ENCODE measurements at regions of chr12 and their contacts with region 1.

Region 1: DNA sequence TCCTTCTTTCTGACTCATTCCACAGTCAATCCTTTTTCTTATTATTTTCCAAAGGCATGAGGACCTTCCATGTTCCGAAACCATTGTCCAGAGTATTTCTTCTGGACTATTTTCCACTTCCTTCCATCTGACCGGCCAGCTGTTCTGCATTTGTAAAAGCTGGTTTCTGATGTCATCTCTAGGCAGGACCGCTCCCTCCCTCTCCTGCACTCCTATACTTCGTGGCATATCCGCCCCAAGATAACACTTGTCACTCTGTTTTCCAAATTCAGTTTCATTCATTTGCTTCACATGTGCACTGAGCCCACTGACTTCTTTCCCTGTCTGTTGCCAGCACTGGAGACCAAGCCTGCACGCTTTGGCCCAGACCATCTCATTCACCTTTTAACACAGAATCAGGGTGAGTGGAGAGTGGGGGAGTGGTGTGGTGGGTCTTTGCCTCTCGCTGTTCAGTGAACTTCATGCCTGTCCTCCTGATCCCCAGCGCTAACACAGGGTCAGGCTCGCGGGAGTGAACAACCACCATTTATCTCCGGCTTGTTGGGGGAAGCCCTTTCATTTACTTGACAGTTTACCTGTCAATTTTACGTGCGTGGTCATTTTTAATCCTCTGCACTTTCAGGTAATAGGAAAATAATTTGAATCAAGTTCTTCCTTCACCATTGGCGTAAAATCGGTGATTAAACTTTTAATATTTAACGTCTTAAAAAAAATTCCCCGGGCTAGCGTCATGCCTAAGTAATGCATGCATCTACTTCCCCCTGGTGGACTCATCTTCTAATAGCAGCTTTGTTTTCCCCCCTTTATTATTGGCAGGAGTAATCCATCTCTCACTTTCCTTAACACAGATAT is 52.5 kb downstream of the C12orf75 start:
- H3K4me3 Mint-ChIP-seq: no peak overlapping the region
- H3K27ac Mint-ChIP-seq: no peak overlapping the region
- H3K4me1 Mint-ChIP-seq: no peaks in the 10 kb centered on the region
- H3K27me3 Mint-ChIP-seq: no peaks in the 10 kb centered on the region

Region 2: GRCh38 chr12:105164068-105164467 is 218.9 kb before region 1 on chr12:
- intact Hi-C with region 1: loop called (anchors 5 kb)
- H3K4me3 Mint-ChIP-seq: no peak overlapping the region
- H3K27ac Mint-ChIP-seq: no peak overlapping the region
- H3K4me1 Mint-ChIP-seq: no peaks in the 10 kb centered on the region
- H3K27me3 Mint-ChIP-seq: no peaks in the 10 kb centered on the region

Region 3: DNA sequence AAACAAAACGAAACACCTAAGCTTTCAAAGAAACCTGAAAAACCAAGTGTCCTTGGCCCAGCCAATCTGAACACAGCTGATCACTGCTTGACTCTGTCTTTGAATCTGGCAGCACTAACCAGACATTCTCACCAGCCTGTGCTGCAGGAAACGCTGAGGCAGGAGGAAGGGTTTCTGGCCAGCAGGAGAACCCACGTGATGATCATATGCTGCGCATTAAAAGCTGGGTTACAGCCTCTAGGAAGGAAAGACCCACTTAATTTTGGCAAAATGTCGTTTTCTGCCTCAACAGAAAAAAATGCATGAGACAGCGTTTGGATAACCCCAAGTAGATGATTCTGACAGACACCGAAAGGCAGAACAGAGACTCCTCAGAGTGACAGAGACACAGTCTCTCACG is 156.8 kb before region 1 on chr12:
- intact Hi-C with region 1: loop called (anchors 10 kb)
- H3K4me3 Mint-ChIP-seq: peak overlapping the region; percentile 20
- H3K27ac Mint-ChIP-seq: peak overlapping the region; percentile 80
- H3K4me1 Mint-ChIP-seq: peaks cover 90% of the 10 kb centered on the region
- H3K27me3 Mint-ChIP-seq: no peaks in the 10 kb centered on the region

Region 4: DNA sequence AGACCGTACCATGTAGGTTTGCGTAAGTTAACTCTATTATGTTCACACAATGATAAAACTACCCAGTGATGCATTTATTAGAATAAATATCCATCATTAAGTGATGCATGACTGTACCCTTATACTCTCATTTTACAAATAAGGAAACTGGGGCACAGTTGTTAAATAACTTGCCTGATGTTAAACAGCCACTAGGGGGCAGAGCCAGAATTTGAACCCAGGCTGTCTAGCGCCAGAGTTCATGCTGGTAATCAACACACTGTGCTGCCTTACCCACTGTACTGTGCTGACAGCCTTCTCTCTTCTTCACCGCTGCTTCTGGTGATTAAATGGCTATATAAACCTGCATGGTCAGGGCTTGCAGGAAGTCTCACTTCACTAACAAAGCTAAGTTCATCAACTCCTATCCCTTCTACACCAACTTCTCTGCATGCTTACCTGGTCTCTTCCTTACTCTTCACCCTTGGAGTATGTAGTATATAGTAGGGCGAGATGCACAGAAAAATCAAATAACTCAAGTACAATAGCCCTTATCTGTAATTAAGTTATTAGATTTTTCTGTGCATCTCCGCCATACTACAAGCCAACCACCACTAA is 103.4 kb before region 1 on chr12:
- intact Hi-C with region 1: loop called (anchors 2 kb)
- H3K4me3 Mint-ChIP-seq: no peak overlapping the region
- H3K27ac Mint-ChIP-seq: no peak overlapping the region
- H3K4me1 Mint-ChIP-seq: peaks cover 7% of the 10 kb centered on the region
- H3K27me3 Mint-ChIP-seq: peaks cover 3% of the 10 kb centered on the region

Region 5: DNA sequence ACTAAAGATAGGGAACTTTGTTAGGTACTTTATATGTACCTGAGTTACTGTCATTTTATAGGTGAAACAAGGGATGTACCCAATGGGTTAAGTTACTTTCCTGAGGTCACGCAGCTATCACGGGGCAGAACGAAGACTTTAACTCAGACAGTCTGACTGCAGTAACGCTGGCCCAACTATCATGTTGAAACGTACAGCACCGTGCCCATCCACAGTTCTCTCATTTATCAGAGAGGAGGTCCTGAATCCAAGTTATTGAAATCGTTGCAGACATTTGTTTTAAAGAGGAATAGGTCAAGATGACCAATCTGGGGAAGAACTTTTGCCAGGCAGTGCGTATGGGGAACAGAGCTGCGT is 53.1 kb before region 1 on chr12:
- intact Hi-C with region 1: loop called (anchors 10 kb)
- H3K4me3 Mint-ChIP-seq: peak overlapping the region; percentile 80
- H3K27ac Mint-ChIP-seq: peak overlapping the region; percentile 61
- H3K4me1 Mint-ChIP-seq: peaks cover 20% of the 10 kb centered on the region
- H3K27me3 Mint-ChIP-seq: peaks cover 13% of the 10 kb centered on the region